ENCODE measurements at regions of chr1 and their contacts with region 1.

Region 1: GRCh38 chr1:62175568-62176179 is 19.0 kb upstream of the L1TD1 start:
- DNase-seq: no peak

Region 2: DNA sequence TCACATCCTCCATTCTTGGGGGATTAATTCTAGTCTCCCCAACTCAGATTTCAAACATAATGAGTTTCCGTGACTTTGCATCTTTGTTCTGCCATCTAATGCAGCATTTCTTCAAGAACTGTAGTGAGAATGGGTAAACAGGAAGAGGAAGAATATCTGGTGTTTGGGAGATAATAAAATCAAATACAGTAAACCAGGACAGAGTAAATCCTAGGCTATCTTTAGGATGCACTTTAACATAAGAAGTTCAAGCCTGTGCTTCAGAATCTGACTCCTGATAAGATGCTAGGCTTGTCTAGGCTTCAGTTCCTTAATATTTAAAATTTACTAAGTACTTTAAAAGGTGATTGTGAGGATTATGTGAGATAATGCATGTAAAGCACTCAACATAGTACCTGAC is 405.5 kb before region 1 on chr1:
- intact Hi-C with region 1: no loop called
- DNase-seq: no peak

Region 3: DNA sequence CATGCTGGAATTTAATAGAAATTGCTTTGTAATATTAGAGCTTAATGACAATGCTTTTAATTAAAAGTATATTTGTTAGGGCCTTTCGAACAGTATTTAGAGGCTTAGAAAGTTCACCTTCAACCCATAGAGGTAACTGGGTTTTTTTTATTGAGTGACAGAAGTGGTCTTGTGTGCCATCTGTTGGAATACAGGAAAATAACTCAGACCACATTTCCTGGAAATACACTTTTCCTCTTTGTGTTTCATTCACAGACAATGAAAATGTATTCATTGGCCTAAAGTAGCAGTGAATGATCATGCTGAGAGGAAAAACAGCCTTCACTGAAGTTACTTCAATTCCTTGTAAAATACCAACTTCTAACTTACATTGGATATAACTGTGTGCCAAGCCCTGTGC is 64.6 kb before region 1 on chr1:
- intact Hi-C with region 1: no loop called
- DNase-seq: no peak

Region 4: DNA sequence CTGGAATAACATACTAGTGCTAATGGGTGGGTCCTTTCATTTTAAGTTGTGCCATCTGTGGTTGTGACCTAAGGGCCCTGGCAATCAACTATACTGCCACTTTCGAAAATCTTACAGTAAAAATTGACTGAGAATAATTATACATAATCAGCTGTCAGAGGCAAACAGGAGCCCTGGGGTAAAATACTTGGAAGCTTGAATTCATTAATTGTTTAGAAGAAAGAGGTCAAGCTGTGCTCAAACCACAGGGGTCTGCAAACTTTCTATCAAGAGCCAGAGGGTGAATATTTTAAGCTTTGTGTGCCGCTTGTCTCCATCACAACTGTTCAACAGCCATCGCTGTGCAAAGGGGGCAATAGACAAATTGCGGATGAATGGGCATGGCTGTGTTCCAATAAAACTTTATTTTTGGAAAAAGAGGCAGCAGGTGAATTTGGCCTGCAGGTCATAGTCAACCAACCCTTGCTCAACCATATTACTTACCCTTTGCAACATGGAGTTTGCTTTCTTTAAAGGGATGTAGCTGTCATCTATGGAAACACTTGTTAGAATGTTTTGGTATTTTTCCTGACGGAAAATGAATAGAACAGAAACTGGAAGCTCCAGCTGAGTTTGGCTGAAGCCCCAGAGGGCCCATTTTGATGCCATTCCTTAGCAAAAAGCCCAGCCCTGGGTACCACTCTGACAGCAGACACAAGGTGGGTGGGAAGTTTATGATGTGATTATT is 225.5 kb after region 1 on chr1:
- intact Hi-C with region 1: loop called (anchors 2 to 5 kb)
- DNase-seq: no peak

Region 5: DNA sequence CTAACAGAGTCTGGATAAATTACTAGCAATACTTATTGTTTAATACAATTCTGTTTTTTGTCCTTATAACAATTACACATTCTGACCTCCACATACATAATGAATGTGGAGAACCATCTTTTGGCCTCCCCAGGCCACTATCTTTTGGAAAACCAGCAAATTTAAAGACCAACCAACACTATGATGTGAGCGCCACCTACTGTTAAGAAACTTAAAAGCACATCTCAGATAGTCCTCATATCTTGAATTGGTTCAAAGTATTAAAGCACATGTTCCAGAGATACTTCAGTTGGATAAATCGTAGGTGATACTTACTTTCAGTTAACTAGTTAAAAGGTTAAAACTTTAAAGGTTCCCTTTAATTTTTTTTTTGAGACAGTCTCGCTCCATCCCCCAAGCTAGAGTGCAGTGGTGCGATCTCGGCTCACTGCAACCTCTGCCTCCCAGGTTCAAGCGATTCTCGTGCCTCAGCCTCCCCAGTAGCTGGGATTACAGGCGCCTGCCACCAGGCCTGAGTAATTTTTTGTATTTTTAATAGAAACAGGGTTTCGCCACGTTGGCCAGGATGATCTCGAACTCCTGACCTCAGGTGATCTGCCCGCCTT is 231.8 kb after region 1 on chr1:
- intact Hi-C with region 1: loop called (anchors 2 to 5 kb)
- DNase-seq: no peak

Measured in posterior vena cava (tissue), 2 donors.